ENCODE measurements at regions of chr9 and their contacts with region 1.

Region 1: GRCh38 chr9:77210116-77210515 is 32.8 kb downstream of the VPS13A start:
- DNase-seq: no peak
- ATAC-seq: no peak
- H3K4me3 ChIP-seq: no peak overlapping the region
- H3K4me3 Mint-ChIP-seq: no peak overlapping the region
- H3K27ac ChIP-seq: no peak overlapping the region
- H3K27ac Mint-ChIP-seq: no peak overlapping the region
- H3K4me1 ChIP-seq: no peaks in the 10 kb centered on the region
- H3K4me1 Mint-ChIP-seq: no peaks in the 10 kb centered on the region
- H3K27me3 ChIP-seq: no peaks in the 10 kb centered on the region
- H3K27me3 Mint-ChIP-seq: no peaks in the 10 kb centered on the region
- CTCF ChIP-seq: no peak

Region 2: DNA sequence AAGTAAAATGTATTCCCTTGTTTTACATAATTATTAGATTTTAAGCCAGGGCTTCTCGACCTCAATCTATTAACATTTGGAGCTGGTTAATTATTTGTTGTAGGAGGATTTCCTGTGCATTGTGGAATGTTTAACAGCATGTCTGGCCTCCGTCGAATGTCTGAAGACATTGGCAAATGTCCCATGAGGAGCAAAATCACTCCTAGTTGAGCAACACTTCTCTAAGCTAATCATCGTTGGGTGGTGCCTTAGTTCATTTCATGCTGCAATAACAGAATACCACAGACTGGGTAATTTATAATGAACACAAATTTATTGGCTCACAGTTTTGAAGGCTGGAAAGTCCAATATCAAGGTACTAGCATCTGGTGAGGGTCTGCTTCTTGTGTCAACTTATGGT is 46.2 kb before region 1 on chr9:
- CTCF ChIA-PET with region 1: interaction called, 3 read pairs
- POLR2A ChIA-PET with region 1: no interaction called
- intact Hi-C with region 1: loop called in 1 of 2 experiments (anchors 2 kb)
- DNase-seq: no peak
- ATAC-seq: no peak
- H3K4me3 ChIP-seq: no peak overlapping the region
- H3K4me3 Mint-ChIP-seq: no peak overlapping the region
- H3K27ac ChIP-seq: no peak overlapping the region
- H3K27ac Mint-ChIP-seq: no peak overlapping the region
- H3K4me1 ChIP-seq: no peaks in the 10 kb centered on the region
- H3K4me1 Mint-ChIP-seq: no peaks in the 10 kb centered on the region
- H3K27me3 ChIP-seq: peaks cover 0 to 4% of the 10 kb centered on the region in 2 experiments
- H3K27me3 Mint-ChIP-seq: peaks cover 14% of the 10 kb centered on the region
- CTCF ChIP-seq: no peak

Measured in CD4-positive, alpha-beta T cell (primary cell).